IMR-90 (cell line): ENCODE measurements at regions of chr2 and their contacts with region 1.

Region 1: DNA sequence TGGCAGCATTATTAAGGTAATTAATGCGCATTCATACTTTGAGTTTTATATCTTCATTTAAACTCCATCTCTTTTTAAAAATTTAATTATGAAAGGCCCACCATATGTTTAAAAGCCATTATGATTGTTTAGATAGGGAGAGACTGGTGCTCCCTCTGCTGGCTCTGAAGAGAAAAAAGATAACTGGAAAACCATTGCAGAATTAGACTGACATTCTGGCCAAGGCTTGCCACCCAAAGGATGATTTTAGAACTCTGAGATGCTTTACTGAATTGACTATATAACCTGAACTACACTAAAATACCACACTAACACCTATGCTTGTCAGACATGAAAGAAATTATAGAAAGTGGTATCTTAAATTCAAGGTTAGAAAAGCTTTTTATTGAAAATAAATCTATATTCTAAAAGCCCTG is 127.6 kb upstream of the SPOPL start:
- DNase-seq: peak; percentile 52
- ATAC-seq: peak; percentile 73
- H3K4me3 ChIP-seq: no peak overlapping the region
- H3K27ac ChIP-seq: no peak overlapping the region
- H3K4me1 ChIP-seq: no peaks in the 10 kb centered on the region
- H3K27me3 ChIP-seq: no peaks in the 10 kb centered on the region
- CTCF ChIP-seq: peak; percentile 70
- POLR2A ChIP-seq: no peak
- RAD21 ChIP-seq: peak; percentile 72

Region 2: DNA sequence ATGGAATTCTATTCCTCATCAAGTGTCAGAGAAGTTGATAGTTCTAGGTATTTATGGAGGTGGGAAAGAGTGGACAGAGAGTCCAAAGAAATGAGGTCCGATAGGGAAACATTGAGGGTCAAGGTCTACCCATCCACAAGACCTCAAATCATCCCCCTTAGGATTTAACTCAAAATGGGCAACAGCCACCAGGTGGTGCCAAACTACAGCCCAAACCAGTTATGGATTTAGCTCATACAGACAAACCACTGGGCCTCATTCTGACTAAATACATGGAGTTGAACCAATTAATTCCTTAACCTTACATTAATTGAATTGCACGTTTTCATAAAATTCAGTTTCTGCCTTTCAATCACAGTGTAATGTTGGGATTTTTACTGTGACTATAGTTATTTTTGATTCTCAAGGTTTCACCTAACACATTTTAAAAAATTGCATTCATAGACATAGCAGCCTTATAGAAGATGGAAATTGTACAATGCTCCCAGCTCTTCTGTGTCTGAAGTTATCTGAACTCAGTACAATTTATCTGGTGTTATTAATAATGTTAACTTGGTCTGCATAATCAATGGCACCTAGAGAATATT is 508.0 kb before region 1 on chr2:
- CTCF ChIA-PET with region 1: no interaction called
- POLR2A ChIA-PET with region 1: no interaction called
- dilution Hi-C with region 1: no loop called
- in situ Hi-C with region 1: no loop called
- intact Hi-C with region 1: loop called (anchors 1 kb)
- DNase-seq: peak; percentile 39
- ATAC-seq: peak; percentile 75
- H3K4me3 ChIP-seq: no peak overlapping the region
- H3K27ac ChIP-seq: no peak overlapping the region
- H3K4me1 ChIP-seq: no peaks in the 10 kb centered on the region
- H3K27me3 ChIP-seq: no peaks in the 10 kb centered on the region
- CTCF ChIP-seq: peak; percentile 57
- POLR2A ChIP-seq: no peak
- RAD21 ChIP-seq: peak; percentile 65

Region 3: DNA sequence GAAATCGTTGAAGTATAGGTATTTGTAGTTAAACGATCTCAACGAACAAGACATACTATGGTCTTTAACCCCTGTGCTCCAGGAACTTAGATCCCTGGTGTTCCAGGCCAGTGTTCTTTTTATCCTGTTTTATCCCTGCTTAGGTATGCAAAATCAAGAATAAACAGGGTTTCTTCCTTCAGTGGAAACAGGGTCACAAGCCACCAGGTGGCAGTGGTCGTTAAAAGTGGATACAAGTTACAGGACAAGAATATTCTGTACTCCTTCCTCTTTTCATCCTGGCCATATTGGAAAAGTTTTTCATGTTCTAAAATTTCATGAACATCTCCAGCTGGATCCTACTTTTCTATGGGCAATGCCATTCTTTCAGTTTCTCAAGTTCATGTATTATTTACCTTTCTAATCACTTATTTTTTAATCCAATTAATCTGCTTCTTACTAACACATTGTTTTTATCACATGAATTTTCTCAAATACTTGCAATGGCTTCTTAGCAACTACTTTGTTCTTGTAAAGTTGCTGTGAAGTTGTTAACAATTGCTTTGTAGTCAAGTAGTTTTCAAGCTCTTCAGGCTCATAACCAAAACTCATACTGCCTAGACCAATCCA is 426.2 kb before region 1 on chr2:
- CTCF ChIA-PET with region 1: no interaction called
- POLR2A ChIA-PET with region 1: no interaction called
- dilution Hi-C with region 1: no loop called
- in situ Hi-C with region 1: no loop called
- intact Hi-C with region 1: loop called (anchors 1 kb)
- DNase-seq: peak; percentile 79
- ATAC-seq: peak; percentile 72
- H3K4me3 ChIP-seq: no peak overlapping the region
- H3K27ac ChIP-seq: no peak overlapping the region
- H3K4me1 ChIP-seq: no peaks in the 10 kb centered on the region
- H3K27me3 ChIP-seq: no peaks in the 10 kb centered on the region; the same call in 1 of the 2 replicates
- CTCF ChIP-seq: peak; percentile 75
- POLR2A ChIP-seq: no peak
- RAD21 ChIP-seq: peak; percentile 79

Region 4: GRCh38 chr2:138787053-138787666 is 413.2 kb after region 1 on chr2:
- CTCF ChIA-PET with region 1: interaction called, 4 read pairs
- POLR2A ChIA-PET with region 1: no interaction called
- dilution Hi-C with region 1: no loop called
- in situ Hi-C with region 1: no loop called
- intact Hi-C with region 1: loop called (anchors 2 kb)
- DNase-seq: peak; percentile 37
- ATAC-seq: peak; percentile 44; the same call in 1 of the 2 replicates
- H3K4me3 ChIP-seq: no peak overlapping the region
- H3K27ac ChIP-seq: no peak overlapping the region
- H3K4me1 ChIP-seq: no peaks in the 10 kb centered on the region
- H3K27me3 ChIP-seq: peaks cover 2% of the 10 kb centered on the region; the same call in 1 of the 2 replicates
- CTCF ChIP-seq: peak; percentile 68
- POLR2A ChIP-seq: no peak
- RAD21 ChIP-seq: peak; percentile 64

Region 5: DNA sequence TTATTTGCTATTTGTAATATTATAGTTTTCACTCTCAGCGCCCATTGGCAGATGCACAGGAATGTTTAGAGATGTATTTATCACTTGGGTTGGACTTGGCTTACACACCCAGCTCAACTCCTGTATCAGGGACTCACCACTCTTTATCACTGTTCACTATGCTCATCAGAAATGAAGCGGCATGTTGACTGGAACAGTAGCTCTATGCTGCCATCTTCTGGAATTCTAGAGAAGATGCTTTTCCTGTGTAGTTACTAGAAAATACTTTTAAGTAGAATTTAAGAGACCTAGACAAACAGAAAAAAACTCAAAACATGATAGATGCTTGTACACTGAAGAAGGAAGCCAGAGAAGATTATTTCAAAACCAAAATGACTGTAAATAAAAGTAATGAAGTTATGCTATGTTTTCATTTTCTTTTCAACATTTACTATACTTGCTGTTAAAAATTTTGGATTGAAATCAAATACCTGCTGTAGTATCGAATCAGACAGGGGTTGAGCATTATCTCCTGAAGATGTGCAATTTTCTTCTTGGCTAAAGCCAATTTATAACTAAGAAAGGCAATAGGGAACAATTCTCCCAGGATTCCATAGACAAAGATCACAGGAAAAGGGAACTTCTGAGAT is 453.5 kb after region 1 on chr2:
- CTCF ChIA-PET with region 1: no interaction called
- POLR2A ChIA-PET with region 1: no interaction called
- dilution Hi-C with region 1: no loop called
- in situ Hi-C with region 1: no loop called
- intact Hi-C with region 1: loop called (anchors 5 kb)
- DNase-seq: peak; percentile 68
- ATAC-seq: peak; percentile 94
- H3K4me3 ChIP-seq: no peak overlapping the region
- H3K27ac ChIP-seq: no peak overlapping the region
- H3K4me1 ChIP-seq: no peaks in the 10 kb centered on the region
- H3K27me3 ChIP-seq: no peaks in the 10 kb centered on the region
- CTCF ChIP-seq: peak; percentile 72
- POLR2A ChIP-seq: no peak
- RAD21 ChIP-seq: peak; percentile 70